ENCODE measurements at regions of chr22 and their contacts with region 1.

Region 1: GRCh38 chr22:22959147-22959827 is 71.7 kb downstream of the IGLL5 start:
- DNase-seq: no peak
- CTCF ChIP-seq: peak; percentile 97

Region 2: DNA sequence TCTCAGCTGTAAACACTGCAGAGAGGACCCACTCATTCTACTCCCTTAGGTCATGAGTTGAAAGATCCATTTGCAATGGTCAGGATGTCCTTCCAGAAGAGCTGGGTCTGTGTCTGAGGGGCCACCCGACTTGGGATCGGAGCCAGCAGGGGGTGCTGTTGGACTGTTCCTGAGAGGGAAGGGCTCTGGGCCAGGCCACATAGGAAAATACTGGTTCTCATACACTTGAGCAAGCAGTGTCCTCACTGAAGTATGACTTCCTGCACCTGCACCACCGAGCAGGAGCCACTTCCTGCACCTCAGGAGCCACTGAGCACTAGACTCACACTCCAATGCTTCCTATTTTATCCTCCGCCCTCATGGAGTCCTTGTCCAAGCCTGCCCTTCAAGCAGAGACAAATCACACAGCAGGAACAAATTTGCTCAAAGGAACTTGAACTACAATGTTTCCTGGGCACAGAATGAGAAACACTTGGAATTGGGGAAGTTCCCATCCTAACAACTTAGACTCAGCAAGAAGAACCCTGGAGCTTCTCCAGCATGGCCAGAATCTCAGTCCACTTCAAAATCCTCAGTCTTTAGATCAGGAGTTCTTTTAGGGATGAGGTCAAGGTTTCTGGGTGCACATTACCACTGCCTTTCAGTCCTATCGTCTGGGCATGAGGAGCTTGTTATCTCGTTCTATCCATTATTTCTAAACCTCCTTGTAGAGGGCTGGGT is 751.3 kb before region 1 on chr22:
- in situ Hi-C with region 1: loop called (anchors 10 kb)
- DNase-seq: peak; percentile 92
- CTCF ChIP-seq: peak; percentile 93

Region 3: GRCh38 chr22:22327723-22328122 is 631.6 kb before region 1 on chr22:
- in situ Hi-C with region 1: loop called (anchors 5 kb)
- DNase-seq: no peak
- CTCF ChIP-seq: no peak

Region 4: GRCh38 chr22:22371031-22371541 is 588.2 kb before region 1 on chr22:
- in situ Hi-C with region 1: loop called (anchors 10 kb)
- DNase-seq: no peak
- CTCF ChIP-seq: no peak

Region 5: GRCh38 chr22:22408731-22409696 is 550.3 kb before region 1 on chr22:
- in situ Hi-C with region 1: loop called (anchors 5 kb)
- DNase-seq: peak; percentile 63
- CTCF ChIP-seq: peak; percentile 61